PC-9 (cell line): ENCODE measurements at regions of chr17 and their contacts with region 1.

Region 1: DNA sequence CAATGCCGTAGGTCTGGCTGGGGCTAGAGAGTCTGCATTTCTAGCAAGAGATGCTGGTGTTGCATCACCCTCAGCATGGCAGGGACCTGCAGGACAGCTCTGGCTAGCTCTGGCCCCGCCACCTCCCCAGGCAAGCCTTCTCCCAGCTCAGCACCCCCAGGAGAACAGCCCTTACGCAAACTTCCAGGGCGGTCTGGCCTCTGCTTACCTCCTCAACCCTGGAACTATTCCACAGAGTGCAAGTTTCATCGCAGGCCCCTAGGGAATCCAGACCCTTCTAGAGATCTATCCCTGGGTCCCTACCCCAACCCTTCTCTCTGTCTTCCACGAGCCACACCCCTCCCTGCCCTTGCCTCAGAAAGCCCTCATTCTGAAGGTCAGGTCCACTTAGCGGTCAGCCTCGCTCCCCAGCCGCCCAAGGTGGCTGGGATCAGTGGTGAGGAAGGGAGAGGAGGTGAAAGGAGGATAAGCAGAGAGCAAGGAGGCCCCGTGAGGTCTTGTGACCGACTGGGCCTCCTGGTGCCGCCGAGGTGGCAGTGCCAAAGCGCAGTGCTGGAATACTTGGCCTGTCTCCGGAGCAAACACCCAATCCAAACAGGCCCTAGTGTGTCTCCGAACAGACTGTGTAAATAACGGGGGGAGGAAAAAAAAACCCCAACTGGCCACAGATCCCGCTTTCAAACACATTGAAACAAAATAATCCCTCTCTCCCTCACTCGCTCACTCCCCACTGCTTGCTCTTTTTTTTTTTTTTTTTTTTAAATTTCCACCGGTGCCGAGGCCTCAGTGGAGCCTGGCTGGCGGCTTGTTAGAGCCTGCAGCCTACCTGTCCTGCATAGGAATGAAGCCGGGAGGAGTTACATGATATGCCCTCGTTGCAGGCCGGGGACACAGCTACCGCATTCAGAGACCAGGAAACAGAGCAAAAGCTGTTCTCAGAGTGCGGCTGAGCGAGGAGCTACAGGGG is 380.9 kb downstream of the SOX9 start:
- DNase-seq: no peak
- H3K4me3 ChIP-seq: no peak overlapping the region
- H3K27ac ChIP-seq: peak overlapping the region; percentile 42; the same call in 1 of the 2 replicates
- H3K4me1 ChIP-seq: peaks cover 26% of the 10 kb centered on the region
- H3K27me3 ChIP-seq: no peaks in the 10 kb centered on the region
- CTCF ChIP-seq: no peak

Region 2: GRCh38 chr17:71726341-71726740 is 775.3 kb before region 1 on chr17:
- CTCF ChIA-PET with region 1: no interaction called
- POLR2A ChIA-PET with region 1: interaction called, 11 read pairs
- intact Hi-C with region 1: no loop called
- DNase-seq: no peak
- H3K4me3 ChIP-seq: no peak overlapping the region
- H3K27ac ChIP-seq: no peak overlapping the region
- H3K4me1 ChIP-seq: no peaks in the 10 kb centered on the region
- H3K27me3 ChIP-seq: no peaks in the 10 kb centered on the region
- CTCF ChIP-seq: no peak

Region 3: GRCh38 chr17:72394531-72394930 is 107.2 kb before region 1 on chr17:
- CTCF ChIA-PET with region 1: no interaction called
- POLR2A ChIA-PET with region 1: interaction called, 21 read pairs
- intact Hi-C with region 1: no loop called
- DNase-seq: peak in 1 of 2 experiments; percentile 32
- H3K4me3 ChIP-seq: no peak overlapping the region
- H3K27ac ChIP-seq: peak overlapping the region; percentile 79
- H3K4me1 ChIP-seq: peaks cover 72% of the 10 kb centered on the region
- H3K27me3 ChIP-seq: no peaks in the 10 kb centered on the region
- CTCF ChIP-seq: no peak

Region 4: GRCh38 chr17:72562615-72563188 is 61.0 kb after region 1 on chr17:
- CTCF ChIA-PET with region 1: interaction called, 18 read pairs
- POLR2A ChIA-PET with region 1: no interaction called
- intact Hi-C with region 1: no loop called
- DNase-seq: no peak
- H3K4me3 ChIP-seq: no peak overlapping the region
- H3K27ac ChIP-seq: no peak overlapping the region
- H3K4me1 ChIP-seq: peaks cover 29% of the 10 kb centered on the region
- H3K27me3 ChIP-seq: no peaks in the 10 kb centered on the region
- CTCF ChIP-seq: no peak